Caco-2 (cell line): ENCODE measurements at regions of chr2 and their contacts with region 1.

Region 1: GRCh38 chr2:231612179-231613053 is 19.8 kb downstream of the TEX44 start:
- DNase-seq: peak; percentile 87 to 88
- H3K4me3 ChIP-seq: no peak overlapping the region; the same call in 1 of the 2 replicates
- H3K4me3 Mint-ChIP-seq: peak overlapping the region; percentile 76
- H3K27ac Mint-ChIP-seq: peak overlapping the region; percentile 94
- H3K4me1 ChIP-seq: peaks cover 42% of the 10 kb centered on the region
- H3K4me1 Mint-ChIP-seq: peaks cover 29% of the 10 kb centered on the region
- H3K27me3 ChIP-seq: no peaks in the 10 kb centered on the region
- H3K27me3 Mint-ChIP-seq: no peaks in the 10 kb centered on the region
- CTCF ChIP-seq: peak; percentile 82 to 83

Region 2: GRCh38 chr2:231662028-231662810 is 49.8 kb after region 1 on chr2:
- CTCF ChIA-PET with region 1: interaction called, 4 read pairs
- POLR2A ChIA-PET with region 1: interaction called, 28 read pairs
- intact Hi-C with region 1: loop called (anchors 1 kb)
- DNase-seq: peak; percentile 93 to 96
- H3K4me3 ChIP-seq: peak overlapping the region; percentile 41
- H3K4me3 Mint-ChIP-seq: peak overlapping the region; percentile 77
- H3K27ac Mint-ChIP-seq: peak overlapping the region; percentile 93
- H3K4me1 ChIP-seq: peaks cover 53% of the 10 kb centered on the region
- H3K4me1 Mint-ChIP-seq: peaks cover 7% of the 10 kb centered on the region
- H3K27me3 ChIP-seq: no peaks in the 10 kb centered on the region
- H3K27me3 Mint-ChIP-seq: no peaks in the 10 kb centered on the region
- CTCF ChIP-seq: no peak

Region 3: DNA sequence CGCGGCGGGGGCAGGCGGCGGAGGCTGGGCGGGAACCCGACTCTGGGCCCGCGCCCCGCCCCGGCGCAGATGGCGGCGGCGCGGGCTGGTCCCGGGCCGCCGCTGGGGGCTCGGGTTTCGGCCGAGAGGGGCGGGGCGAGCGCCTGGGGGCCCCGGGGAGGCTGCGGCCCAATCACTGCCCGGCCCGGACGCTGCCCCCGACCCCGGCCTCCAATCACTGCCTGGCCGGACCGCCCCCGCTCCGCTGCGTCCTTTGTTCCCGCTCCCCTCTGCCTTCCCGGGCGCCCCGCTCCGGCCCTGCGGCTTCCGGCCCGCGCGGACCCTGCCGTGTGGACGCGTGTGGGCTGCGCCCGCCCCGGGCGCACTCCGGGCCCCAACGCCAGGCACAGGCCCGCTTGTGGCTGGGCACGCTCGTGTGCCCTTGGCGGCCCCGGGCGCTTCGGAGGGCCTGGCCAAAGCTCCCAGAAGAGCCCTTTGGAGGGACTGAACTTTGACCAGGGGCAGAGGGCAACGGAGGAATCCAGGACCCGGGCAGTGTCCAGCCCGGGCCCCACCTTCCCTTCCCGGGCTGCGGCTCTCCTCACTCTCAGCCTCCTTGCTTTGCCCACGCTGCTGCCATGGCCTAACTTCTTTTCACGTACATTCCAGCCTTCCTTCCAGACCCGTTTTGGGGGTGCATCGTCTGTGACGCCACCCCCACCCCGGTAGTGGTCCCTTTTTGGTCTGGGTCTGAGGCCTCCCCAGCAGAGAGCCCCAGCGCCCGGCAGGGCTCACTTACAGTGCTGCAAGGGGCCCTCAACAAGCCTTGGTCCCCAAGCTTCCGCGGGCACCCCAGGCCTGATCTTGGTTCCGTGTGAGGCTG is 68.8 kb after region 1 on chr2:
- CTCF ChIA-PET with region 1: interaction called, 12 read pairs
- POLR2A ChIA-PET with region 1: interaction called, 14 read pairs
- intact Hi-C with region 1: no loop called
- DNase-seq: peak; percentile 91 to 94
- H3K4me3 ChIP-seq: peak overlapping the region; percentile 67
- H3K4me3 Mint-ChIP-seq: peak overlapping the region; percentile 81
- H3K27ac Mint-ChIP-seq: peak overlapping the region; percentile 93
- H3K4me1 ChIP-seq: peaks cover 25% of the 10 kb centered on the region
- H3K4me1 Mint-ChIP-seq: peaks cover 16% of the 10 kb centered on the region
- H3K27me3 ChIP-seq: no peaks in the 10 kb centered on the region
- H3K27me3 Mint-ChIP-seq: no peaks in the 10 kb centered on the region
- CTCF ChIP-seq: no peak

Region 4: DNA sequence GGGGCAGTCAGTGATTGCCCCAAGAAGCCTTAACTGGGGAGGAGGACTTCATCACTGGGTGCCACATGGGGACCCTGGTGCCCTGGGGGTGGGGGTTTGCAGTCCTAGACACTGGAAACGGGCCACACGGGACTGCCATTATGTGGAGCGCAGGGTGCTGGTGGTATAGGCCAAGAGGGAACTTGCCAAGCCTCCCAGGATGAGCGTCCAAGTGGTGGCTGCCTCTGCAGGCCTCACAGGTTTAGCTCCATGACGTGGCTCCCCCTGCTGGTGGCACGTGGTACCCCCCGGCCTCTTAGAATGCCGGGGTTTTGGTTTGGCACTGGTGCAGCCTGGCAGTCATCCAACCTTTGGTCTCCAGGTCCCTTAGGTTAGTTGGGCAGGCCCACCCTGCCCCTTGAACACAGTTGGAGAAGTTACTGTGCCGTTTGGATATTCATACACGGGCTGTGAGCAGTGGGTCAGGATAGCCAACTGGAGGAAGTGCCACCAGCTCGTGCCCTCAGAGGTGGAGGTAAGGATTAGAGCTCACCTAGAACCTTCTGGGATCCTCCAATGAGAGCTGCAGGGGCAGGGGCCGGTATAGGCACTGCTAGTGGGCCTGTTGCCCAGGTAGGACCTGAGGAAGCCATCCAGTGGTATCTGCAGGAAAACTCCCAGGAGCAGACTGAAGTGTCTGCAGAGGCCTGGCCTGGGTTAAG is 101.5 kb after region 1 on chr2:
- CTCF ChIA-PET with region 1: interaction called, 5 read pairs
- POLR2A ChIA-PET with region 1: interaction called, 20 read pairs
- intact Hi-C with region 1: loop called (anchors 1 kb)
- DNase-seq: peak; percentile 81 to 82
- H3K4me3 ChIP-seq: no peak overlapping the region
- H3K4me3 Mint-ChIP-seq: peak overlapping the region; percentile 31
- H3K27ac Mint-ChIP-seq: peak overlapping the region; percentile 45
- H3K4me1 ChIP-seq: peaks cover 11% of the 10 kb centered on the region
- H3K4me1 Mint-ChIP-seq: peaks cover 16% of the 10 kb centered on the region
- H3K27me3 ChIP-seq: no peaks in the 10 kb centered on the region
- H3K27me3 Mint-ChIP-seq: no peaks in the 10 kb centered on the region
- CTCF ChIP-seq: peak; percentile 74 to 82